Heart right ventricle (tissue), 16 donors: ENCODE measurements at regions of chr3 and their contacts with region 1.

Region 1: GRCh38 chr3:7787871-7788828 is 713.5 kb upstream of the LMCD1 start:
- DNase-seq: no peak
- ATAC-seq: no peak
- H3K4me3 ChIP-seq: no peak overlapping the region
- H3K27ac ChIP-seq: no peak overlapping the region
- H3K4me1 ChIP-seq: no peaks in the 10 kb centered on the region
- H3K27me3 ChIP-seq: no peaks in the 10 kb centered on the region
- CTCF ChIP-seq: peak in 2 of 9 donors; percentile 9 to 20

Region 2: GRCh38 chr3:7581831-7582230 is 206.3 kb before region 1 on chr3:
- intact Hi-C with region 1: loop called in 1 of 10 experiments (anchors 5 kb)
- DNase-seq: no peak
- ATAC-seq: no peak
- H3K4me3 ChIP-seq: no peak overlapping the region
- H3K27ac ChIP-seq: no peak overlapping the region
- H3K4me1 ChIP-seq: no peaks in the 10 kb centered on the region
- H3K27me3 ChIP-seq: no peaks in the 10 kb centered on the region
- CTCF ChIP-seq: no peak